BJ (cell line): ENCODE measurements at regions of chr15 and their contacts with region 1.

Region 1: GRCh38 chr15:35444557-35445204 is 101.3 kb downstream of the DPH6 start:
- DNase-seq: no peak
- H3K4me3 ChIP-seq: no peak overlapping the region
- H3K27me3 ChIP-seq: no peaks in the 10 kb centered on the region
- CTCF ChIP-seq: peak; percentile 79

Region 2: GRCh38 chr15:35078221-35078915 is 366.3 kb before region 1 on chr15:
- CTCF ChIA-PET with region 1: interaction called, 56 read pairs
- POLR2A ChIA-PET with region 1: interaction called, 4 read pairs
- DNase-seq: no peak
- H3K4me3 ChIP-seq: no peak overlapping the region
- H3K27me3 ChIP-seq: no peaks in the 10 kb centered on the region
- CTCF ChIP-seq: peak; percentile 76

Region 3: GRCh38 chr15:35281515-35281914 is 163.2 kb before region 1 on chr15:
- CTCF ChIA-PET with region 1: interaction called, 11 read pairs
- POLR2A ChIA-PET with region 1: no interaction called
- DNase-seq: peak; percentile 30
- H3K4me3 ChIP-seq: no peak overlapping the region
- H3K27me3 ChIP-seq: no peaks in the 10 kb centered on the region
- CTCF ChIP-seq: no peak

Region 4: DNA sequence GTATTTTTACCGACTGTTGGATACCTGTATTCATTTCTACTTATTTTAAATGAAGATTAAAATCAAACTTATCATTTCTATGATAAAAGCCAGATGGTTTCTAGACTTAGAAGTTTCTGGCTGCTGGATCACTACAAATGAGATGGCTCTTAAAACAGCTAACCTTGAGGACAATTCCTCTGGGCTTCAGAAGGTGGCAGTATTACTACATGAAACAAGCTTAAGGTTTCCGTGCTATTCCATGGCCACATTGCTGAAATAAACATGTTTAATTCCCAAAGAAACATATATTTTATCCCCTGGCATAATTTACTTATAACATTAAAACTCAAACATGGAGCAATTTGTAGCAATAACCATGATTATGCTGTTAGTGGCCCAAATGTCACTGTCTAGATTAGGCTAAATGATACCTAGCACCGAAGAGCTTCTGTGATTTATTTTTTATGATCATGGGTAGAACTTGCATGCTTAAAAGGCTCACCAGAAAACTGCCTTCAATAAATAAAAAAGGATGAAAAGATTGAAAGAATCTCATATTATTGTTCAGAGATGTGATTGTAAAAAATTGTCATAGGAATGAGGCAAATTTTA is 155.6 kb before region 1 on chr15:
- CTCF ChIA-PET with region 1: interaction called, 207 read pairs
- POLR2A ChIA-PET with region 1: no interaction called
- DNase-seq: no peak
- H3K4me3 ChIP-seq: no peak overlapping the region
- H3K27me3 ChIP-seq: no peaks in the 10 kb centered on the region
- CTCF ChIP-seq: peak; percentile 80

Region 5: DNA sequence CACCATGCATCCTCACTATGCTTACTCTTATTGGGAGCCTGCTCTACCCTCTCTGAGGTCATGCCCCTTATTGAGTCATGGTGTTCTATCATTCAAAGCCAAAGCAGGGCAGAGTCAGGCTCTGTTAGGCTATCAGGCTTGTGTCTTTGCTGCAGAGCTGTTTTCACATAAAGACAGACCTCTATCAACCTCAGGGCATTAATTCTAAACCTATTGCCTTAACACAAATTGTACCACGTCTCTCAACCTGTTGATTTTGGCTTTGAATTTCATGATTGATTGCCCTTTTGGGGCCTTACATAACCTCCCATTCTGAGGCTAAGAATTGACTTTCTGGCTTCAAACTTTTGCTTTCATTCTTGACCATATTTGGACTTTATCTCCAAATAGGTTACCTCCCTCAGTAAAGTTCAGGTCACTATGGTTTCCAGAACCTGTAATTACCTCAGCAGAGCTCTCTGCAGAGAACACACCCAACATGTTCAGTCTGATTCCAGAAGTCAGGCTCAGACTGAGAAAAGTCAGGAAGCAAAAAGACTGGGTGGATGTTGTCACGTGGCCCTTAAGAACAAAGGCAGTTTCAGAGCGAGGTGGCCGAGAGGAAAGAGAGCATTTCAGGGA is 138.2 kb before region 1 on chr15:
- CTCF ChIA-PET with region 1: interaction called, 29 read pairs
- POLR2A ChIA-PET with region 1: no interaction called
- DNase-seq: no peak
- H3K4me3 ChIP-seq: no peak overlapping the region
- H3K27me3 ChIP-seq: no peaks in the 10 kb centered on the region
- CTCF ChIP-seq: no peak

Region 6: DNA sequence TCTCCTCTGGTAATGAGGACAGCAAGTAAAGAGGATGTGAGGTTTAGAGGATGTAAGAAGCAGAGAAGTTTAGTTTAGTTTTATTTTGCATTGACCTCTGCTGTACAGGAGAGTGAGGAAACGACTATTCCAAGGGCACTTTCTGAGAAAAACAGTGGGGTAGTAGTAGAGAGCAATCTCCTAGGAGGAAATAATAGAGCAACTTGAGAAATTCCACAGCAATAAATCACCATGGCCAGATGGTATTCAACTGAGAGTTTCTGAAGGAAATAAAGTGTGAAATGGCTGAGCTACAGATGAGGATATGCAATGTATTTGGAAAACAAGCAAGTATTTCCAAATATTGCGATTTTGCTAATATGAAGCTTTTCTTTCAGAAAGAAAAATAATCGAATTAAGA is 17.6 kb before region 1 on chr15:
- CTCF ChIA-PET with region 1: interaction called, 10 read pairs
- POLR2A ChIA-PET with region 1: no interaction called
- DNase-seq: peak; percentile 44
- H3K4me3 ChIP-seq: no peak overlapping the region
- H3K27me3 ChIP-seq: no peaks in the 10 kb centered on the region
- CTCF ChIP-seq: no peak

Region 7: GRCh38 chr15:35458176-35458856 is 13.6 kb after region 1 on chr15:
- CTCF ChIA-PET with region 1: interaction called, 10 read pairs
- POLR2A ChIA-PET with region 1: no interaction called
- DNase-seq: no peak
- H3K4me3 ChIP-seq: no peak overlapping the region
- H3K27me3 ChIP-seq: no peaks in the 10 kb centered on the region
- CTCF ChIP-seq: no peak

Region 8: DNA sequence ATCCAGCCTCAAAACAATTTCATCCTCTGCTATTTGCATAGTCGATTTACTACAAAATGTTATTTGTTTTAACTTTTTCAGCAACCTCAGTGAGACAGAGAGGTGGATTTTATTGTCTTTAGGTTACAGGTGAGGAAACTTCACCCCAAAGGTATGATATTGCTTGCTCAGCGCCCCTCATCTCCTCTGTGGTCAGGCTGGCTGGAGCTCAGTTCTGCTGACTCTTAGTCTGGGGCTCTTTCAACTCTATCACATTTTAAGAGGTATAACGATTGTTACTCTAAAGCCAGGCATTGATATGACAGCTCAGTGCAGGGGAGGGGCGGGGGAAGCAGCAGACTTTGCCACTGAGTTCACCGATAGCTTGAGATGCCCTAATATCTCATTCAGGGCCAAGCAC is 204.3 kb after region 1 on chr15:
- CTCF ChIA-PET with region 1: no interaction called
- POLR2A ChIA-PET with region 1: no interaction called
- DNase-seq: no peak
- H3K4me3 ChIP-seq: no peak overlapping the region
- H3K27me3 ChIP-seq: no peaks in the 10 kb centered on the region
- CTCF ChIP-seq: no peak